H1 (cell line): ENCODE measurements at regions of chr16 and their contacts with region 1.

Region 1: DNA sequence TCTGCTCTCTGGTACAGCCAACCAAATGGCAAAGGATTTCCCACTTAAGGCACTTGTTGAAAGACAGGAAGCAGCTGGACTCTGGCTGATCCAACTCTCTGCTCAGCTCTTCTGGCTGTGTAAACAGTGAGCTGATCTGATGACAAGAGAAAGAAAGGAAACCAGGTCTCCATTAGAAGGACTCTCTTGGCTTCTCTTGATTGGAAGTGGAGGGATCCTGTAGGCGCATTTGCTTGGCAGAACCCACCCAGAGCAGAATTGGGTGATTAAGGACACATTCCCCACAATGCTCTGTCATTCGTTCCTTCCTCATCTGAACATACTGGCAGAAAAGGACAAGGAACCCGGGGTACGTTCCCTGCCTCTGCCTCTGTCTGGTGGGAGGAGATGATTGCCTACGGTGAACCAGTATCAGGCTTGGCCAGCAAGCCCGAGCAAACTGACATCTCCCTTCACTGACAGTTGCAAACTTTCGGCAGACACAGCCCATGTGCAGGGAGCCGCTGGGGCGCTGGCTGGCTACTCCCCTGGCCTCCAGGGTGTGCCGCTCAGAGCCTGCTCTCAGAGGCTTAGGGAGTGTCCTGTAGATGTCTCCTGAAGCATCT is 29.1 kb downstream of the LDHD start:
- DNase-seq: no peak
- H3K4me3 ChIP-seq: no peak overlapping the region
- H3K27ac ChIP-seq: no peak overlapping the region
- H3K4me1 ChIP-seq: peaks cover 0 to 17% (median 8%) of the 10 kb centered on the region in 4 experiments; a peak in 4 of 7 replicates
- H3K27me3 ChIP-seq: no peaks in the 10 kb centered on the region
- CTCF ChIP-seq: no peak
- EP300 ChIP-seq: no peak
- POLR2A ChIP-seq: no peak
- RAD21 ChIP-seq: peak in 1 of 2 experiments; percentile 21; a peak in 1 of 4 replicates

Region 2: GRCh38 chr16:75074920-75075687 is 12.4 kb before region 1 on chr16:
- CTCF ChIA-PET with region 1: interaction called, 10 read pairs
- POLR2A ChIA-PET with region 1: interaction called, 4 read pairs
- DNase-seq: no peak
- H3K4me3 ChIP-seq: no peak overlapping the region
- H3K27ac ChIP-seq: no peak overlapping the region
- H3K4me1 ChIP-seq: peaks cover 5 to 17% (median 14%) of the 10 kb centered on the region in 4 experiments
- H3K27me3 ChIP-seq: no peaks in the 10 kb centered on the region
- CTCF ChIP-seq: no peak
- EP300 ChIP-seq: no peak
- POLR2A ChIP-seq: no peak
- RAD21 ChIP-seq: no peak

Region 3: GRCh38 chr16:75130150-75130771 is 42.8 kb after region 1 on chr16:
- CTCF ChIA-PET with region 1: no interaction called
- POLR2A ChIA-PET with region 1: no interaction called
- DNase-seq: no peak
- H3K4me3 ChIP-seq: no peak overlapping the region
- H3K27ac ChIP-seq: no peak overlapping the region
- H3K4me1 ChIP-seq: peaks cover 0 to 12% (median 6%) of the 10 kb centered on the region in 4 experiments; a peak in 5 of 7 replicates
- H3K27me3 ChIP-seq: no peaks in the 10 kb centered on the region
- CTCF ChIP-seq: peak; percentile 32 to 56 (median 46); a peak in 3 of 4 replicates
- EP300 ChIP-seq: no peak
- POLR2A ChIP-seq: no peak
- RAD21 ChIP-seq: peak; percentile 81 to 85